Kidney (tissue), 22 donors: ENCODE measurements at regions of chr1 and their contacts with region 1.

Region 1: DNA sequence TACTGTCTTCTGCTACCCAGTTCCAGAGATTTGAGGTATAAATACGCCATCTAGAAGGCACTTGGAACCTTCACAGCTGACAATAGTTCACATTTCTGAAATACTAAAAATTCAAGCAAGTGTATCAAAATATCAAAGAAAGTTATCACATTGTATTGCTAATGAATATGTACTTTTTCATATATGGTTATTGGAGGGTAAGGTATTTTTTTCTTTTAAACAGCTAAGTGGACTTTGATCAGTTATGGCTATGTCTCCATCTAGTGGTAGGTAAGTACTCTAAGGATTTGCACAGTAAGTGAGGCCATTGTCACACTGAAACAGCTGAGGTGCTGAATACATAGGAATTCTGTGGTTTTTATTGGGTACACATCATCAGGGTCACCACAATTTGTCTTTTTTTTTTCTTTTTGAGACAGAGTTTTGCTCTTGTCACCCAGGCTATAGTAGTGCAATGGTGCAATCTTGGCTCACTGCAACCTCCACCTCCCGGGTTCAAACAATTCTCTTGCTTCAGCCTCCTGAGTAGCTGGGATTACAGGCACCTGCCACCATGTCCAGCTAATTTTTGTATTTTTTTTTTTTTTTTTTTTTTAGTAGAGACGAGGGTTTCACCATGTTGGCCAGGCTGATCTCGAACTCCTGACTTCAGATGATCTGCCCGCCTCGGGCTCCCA is 49.1 kb upstream of the CR2 start:
- DNase-seq: peak in 2 of 5 donors; percentile 73 to 89
- H3K4me3 ChIP-seq: no peak overlapping the region
- H3K27ac ChIP-seq: no peak overlapping the region
- H3K4me1 ChIP-seq: no peaks in the 10 kb centered on the region
- H3K27me3 ChIP-seq: no peaks in the 10 kb centered on the region
- CTCF ChIP-seq: peak; percentile 70

Region 2: GRCh38 chr1:207084701-207085180 is 320.2 kb before region 1 on chr1:
- intact Hi-C with region 1: loop called (anchors 10 kb)
- DNase-seq: peak in 4 of 5 donors; percentile 53 to 90 (median 78)
- H3K4me3 ChIP-seq: no peak overlapping the region
- H3K27ac ChIP-seq: no peak overlapping the region
- H3K4me1 ChIP-seq: peaks cover 0 to 4% (median 3%) of the 10 kb centered on the region in 3 donors
- H3K27me3 ChIP-seq: no peaks in the 10 kb centered on the region
- CTCF ChIP-seq: peak; percentile 58

Region 3: DNA sequence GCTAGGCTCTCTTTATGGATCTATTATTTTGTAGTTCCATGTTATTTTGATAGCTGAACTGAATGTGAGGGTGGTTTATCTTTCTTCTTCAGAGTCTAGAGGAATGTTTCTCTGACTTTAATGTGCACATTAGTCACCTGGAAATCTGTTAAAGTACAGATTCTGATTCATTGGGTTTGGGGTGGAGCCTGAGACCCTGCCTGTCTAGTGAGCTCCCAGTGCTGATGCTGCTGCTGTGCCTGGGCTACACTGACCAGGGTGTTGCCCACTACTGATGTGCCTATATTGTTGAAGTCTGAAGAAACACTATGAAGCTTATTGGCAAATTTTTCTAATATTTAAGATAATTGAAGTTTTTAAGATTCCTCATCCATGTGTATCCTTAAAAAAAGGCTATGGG is 382.8 kb after region 1 on chr1:
- intact Hi-C with region 1: no loop called
- DNase-seq: no peak
- H3K4me3 ChIP-seq: no peak overlapping the region
- H3K27ac ChIP-seq: no peak overlapping the region
- H3K4me1 ChIP-seq: no peaks in the 10 kb centered on the region
- H3K27me3 ChIP-seq: no peaks in the 10 kb centered on the region
- CTCF ChIP-seq: no peak

Region 4: DNA sequence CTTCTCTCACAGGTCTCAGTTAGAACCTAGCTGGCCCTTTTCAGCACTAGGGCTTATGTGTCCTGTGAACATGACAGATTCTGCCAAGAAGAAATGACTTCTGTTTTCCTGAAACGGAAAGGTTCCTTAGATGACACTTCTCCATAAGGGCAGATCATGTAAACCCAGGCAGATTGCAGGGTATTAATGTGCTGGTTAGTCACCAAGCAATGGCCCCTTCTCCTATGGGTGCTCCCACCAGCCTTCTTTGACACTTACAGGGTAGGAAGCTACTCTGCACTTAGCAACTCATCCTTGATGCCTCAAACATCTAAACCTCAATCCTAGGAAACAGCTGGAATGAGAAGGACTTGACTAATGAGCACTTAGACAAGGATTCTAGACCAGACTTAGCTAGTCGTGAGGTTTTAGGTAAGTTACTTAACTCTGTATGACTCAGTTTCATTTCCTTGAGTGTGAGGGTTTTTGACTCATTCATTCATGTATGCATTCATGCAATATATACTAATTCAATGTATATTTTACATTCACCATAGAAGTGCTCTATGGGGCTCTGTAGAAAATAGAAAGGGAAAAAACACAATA is 913.3 kb after region 1 on chr1:
- intact Hi-C with region 1: no loop called
- DNase-seq: no peak
- H3K4me3 ChIP-seq: no peak overlapping the region
- H3K27ac ChIP-seq: no peak overlapping the region
- H3K4me1 ChIP-seq: no peaks in the 10 kb centered on the region
- H3K27me3 ChIP-seq: no peaks in the 10 kb centered on the region
- CTCF ChIP-seq: no peak